CD4-positive, alpha-beta memory T cell (primary cell): ENCODE measurements at regions of chr7 and their contacts with region 1.

Region 1: DNA sequence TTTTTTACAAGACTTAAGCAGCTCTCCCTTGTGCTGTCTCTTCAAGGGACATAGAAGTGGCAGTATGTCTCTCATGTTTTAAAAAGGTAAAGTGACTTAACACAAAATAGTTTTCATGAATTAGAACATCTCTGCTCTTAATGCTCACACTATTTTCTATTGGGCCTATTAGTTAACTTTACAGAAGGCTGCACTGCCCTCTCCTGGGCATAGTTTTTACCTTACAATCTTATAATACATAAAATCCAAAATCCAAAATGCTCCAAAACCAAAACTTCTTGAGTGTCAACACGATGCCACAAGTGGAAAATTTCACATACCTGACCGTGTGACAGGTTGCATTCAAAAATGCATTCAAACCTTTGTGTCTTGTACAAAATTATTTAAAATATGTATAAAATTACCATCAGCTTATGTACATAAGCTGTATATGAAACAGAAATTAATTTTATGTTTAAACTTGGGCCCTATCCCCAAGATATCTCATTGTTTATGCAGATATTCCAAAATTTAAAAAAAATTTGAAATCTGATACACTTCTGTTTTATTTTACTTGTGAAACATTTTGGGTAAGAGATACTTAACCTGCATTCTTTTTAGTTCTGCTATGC is 25.8 kb downstream of the TES start:
- DNase-seq: peak; percentile 50 to 65 (median 62)
- H3K4me3 ChIP-seq: no peak overlapping the region
- H3K4me3 Mint-ChIP-seq: peak overlapping the region in 4 of 8 donors; percentile 19 to 52 (median 24)
- H3K27ac ChIP-seq: no peak overlapping the region
- H3K27ac Mint-ChIP-seq: peak overlapping the region; percentile 4 to 84 (median 63)
- H3K4me1 ChIP-seq: peaks cover 50% of the 10 kb centered on the region
- H3K4me1 Mint-ChIP-seq: peaks cover 53 to 88% (median 54%) of the 10 kb centered on the region in 4 donors
- H3K27me3 ChIP-seq: no peaks in the 10 kb centered on the region
- H3K27me3 Mint-ChIP-seq: no peaks in the 10 kb centered on the region

Region 2: DNA sequence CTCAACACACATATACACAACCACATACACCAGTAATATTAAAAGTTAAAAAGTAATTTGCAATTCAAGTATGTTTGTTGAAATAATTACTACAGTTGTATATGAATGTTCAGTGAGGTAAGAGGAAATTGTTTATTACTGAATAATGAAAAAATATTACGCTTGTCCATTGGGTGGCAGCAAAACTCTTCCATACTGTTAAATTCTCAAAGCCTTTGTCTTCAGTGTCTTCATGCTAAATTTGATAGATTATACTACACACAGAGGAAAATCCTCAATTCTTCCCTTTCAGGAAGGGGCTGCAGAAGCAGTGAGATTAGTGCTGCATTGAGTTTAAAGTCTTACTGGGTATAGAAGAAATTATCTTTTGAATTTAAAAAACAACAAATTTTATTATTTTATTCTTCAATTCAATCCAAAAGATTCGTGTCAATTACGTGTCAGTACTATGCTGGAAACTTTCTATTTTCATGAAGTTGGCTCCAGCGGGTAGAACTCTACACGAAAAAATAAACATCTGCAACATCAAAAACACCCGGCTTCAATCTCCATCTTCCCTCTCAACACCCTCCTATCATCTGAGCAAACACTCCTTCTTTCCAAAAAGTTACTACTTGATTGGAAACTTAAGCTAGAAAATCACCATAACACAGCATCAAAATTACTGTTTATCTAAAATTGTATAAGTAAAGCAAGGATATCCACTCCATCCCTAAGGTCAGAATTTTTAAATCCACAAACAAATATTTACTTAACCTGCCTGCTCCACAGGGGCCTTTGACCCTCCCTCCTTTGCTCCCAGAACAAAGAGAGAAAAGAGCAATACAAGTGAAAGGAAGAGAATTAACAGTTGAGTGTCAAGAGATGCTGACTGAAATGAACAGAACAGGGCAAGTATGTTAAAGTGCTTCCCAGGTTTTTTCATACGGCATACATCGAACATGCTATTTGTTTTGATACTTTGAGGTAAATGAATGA is 62.8 kb before region 1 on chr7:
- CTCF ChIA-PET with region 1: interaction called, 409 read pairs
- POLR2A ChIA-PET with region 1: interaction called, 5 read pairs
- intact Hi-C with region 1: no loop called
- DNase-seq: peak in 4 of 5 donors; percentile 52 to 65 (median 60)
- H3K4me3 ChIP-seq: no peak overlapping the region
- H3K4me3 Mint-ChIP-seq: no peak overlapping the region
- H3K27ac ChIP-seq: no peak overlapping the region
- H3K27ac Mint-ChIP-seq: no peak overlapping the region
- H3K4me1 ChIP-seq: no peaks in the 10 kb centered on the region
- H3K4me1 Mint-ChIP-seq: no peaks in the 10 kb centered on the region
- H3K27me3 ChIP-seq: no peaks in the 10 kb centered on the region
- H3K27me3 Mint-ChIP-seq: peaks cover 10 to 11% of the 10 kb centered on the region in 2 donors

Region 3: DNA sequence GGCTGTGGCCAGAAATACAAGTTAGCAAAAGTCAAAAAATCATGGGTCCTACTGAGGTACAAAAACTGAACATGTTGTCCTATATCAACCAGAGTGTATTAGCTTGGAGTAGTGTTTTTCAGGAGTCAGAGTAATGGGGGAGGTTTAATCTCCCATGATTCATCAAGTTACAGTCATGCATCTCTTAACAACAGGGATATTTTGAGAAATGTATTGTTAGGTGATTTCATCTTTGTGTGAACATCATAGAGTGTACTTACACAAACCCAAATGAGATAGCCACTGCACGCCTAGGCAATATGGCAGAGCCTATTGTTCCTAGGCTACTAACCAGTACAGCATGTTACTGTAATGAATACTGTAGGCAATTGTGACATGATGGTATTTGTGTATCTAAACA is 40.7 kb before region 1 on chr7:
- CTCF ChIA-PET with region 1: interaction called, 34 read pairs
- POLR2A ChIA-PET with region 1: no interaction called
- intact Hi-C with region 1: no loop called
- DNase-seq: no peak
- H3K4me3 ChIP-seq: no peak overlapping the region
- H3K4me3 Mint-ChIP-seq: no peak overlapping the region
- H3K27ac ChIP-seq: no peak overlapping the region
- H3K27ac Mint-ChIP-seq: no peak overlapping the region
- H3K4me1 ChIP-seq: no peaks in the 10 kb centered on the region
- H3K4me1 Mint-ChIP-seq: no peaks in the 10 kb centered on the region
- H3K27me3 ChIP-seq: no peaks in the 10 kb centered on the region
- H3K27me3 Mint-ChIP-seq: peaks cover 4% of the 10 kb centered on the region in 2 donors

Region 4: DNA sequence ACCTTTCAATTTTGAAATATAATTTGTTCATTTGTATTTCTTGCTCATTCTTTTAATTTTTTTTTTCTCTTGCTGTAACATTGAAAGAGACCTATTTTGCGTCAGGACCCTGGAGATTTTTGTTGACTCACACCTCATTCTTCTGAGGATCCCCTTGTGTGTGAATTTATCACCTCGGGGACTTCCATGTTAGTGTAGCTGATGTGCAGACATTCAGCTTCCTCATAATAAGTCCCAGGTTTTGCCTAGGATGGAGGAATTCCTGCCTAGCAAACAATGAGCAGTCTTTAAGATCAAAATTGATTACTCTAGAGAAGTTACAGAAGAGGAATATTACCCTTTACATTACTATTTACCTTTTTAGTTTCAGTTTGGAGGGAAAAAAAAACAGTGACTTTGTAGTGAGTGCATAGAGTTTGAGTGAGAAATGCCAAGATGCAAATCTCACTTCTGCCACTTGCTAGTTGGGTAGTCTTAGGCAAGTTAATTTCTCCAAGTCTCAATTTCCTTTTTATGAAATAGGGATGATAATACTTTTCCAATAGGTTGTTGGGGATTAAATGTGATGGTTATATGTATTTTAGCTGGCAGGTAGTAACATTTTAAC is 11.5 kb before region 1 on chr7:
- CTCF ChIA-PET with region 1: interaction called, 20 read pairs
- POLR2A ChIA-PET with region 1: interaction called, 25 read pairs
- intact Hi-C with region 1: no loop called
- DNase-seq: peak in 2 of 5 donors; percentile 21 to 57
- H3K4me3 ChIP-seq: no peak overlapping the region
- H3K4me3 Mint-ChIP-seq: peak overlapping the region; percentile 11 to 83 (median 64)
- H3K27ac ChIP-seq: no peak overlapping the region
- H3K27ac Mint-ChIP-seq: peak overlapping the region; percentile 38 to 79 (median 74)
- H3K4me1 ChIP-seq: peaks cover 93% of the 10 kb centered on the region
- H3K4me1 Mint-ChIP-seq: peaks cover 74 to 93% (median 80%) of the 10 kb centered on the region in 4 donors
- H3K27me3 ChIP-seq: no peaks in the 10 kb centered on the region
- H3K27me3 Mint-ChIP-seq: no peaks in the 10 kb centered on the region

Region 5: DNA sequence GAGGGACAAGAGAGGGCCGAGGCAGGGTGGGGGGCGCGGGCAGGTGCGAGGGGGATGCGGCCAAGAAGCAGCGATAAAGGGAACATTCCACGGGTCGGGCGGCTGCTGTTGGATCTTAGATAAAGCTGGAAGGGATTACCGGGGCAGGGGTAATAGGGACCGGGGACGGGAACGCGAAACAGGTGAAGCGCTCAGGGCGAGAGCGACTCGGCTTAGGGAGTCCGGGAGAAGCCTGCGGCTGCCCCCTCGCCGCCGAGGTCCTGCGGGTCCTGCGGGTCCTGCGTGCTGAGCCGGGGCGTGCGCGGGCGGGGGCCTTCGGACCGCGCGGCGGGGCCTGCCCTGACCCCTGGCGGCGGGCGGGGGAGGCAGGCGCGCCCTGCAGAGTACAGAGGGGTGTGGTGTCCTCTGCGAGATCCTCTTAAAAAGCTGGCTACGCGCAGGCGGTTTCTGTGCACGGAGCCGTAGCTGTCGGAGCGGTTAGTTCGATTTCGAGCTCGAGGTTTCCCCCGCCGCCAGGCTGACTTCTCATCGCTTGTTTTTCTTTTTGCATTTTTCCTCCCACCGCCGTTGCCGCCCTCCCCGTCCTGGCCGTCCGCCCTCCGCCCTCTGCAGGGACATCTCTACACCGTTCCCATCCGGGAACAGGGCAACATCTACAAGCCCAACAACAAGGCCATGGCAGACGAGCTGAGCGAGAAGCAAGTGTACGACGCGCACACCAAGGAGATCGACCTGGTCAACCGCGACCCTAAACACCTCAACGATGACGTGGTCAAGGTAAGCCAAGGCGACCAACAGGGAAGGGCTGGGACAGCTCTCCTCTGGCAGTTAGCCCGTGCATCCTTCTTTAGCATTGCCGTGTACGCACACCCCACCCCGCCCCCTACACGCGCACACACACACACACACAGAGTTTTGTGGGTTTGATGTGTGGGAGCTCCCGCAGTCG is 290.1 kb after region 1 on chr7:
- CTCF ChIA-PET with region 1: interaction called, 12 read pairs
- POLR2A ChIA-PET with region 1: no interaction called
- intact Hi-C with region 1: no loop called
- DNase-seq: peak; percentile 50 to 67 (median 63)
- H3K4me3 ChIP-seq: peak overlapping the region in 1 of 2 donors; percentile 35
- H3K4me3 Mint-ChIP-seq: peak overlapping the region; percentile 80 to 94 (median 87)
- H3K27ac ChIP-seq: no peak overlapping the region
- H3K27ac Mint-ChIP-seq: no peak overlapping the region
- H3K4me1 ChIP-seq: peaks cover 22% of the 10 kb centered on the region
- H3K4me1 Mint-ChIP-seq: peaks cover 12 to 30% (median 22%) of the 10 kb centered on the region in 4 donors
- H3K27me3 ChIP-seq: peaks cover 29% of the 10 kb centered on the region
- H3K27me3 Mint-ChIP-seq: peaks cover 53 to 60% of the 10 kb centered on the region in 2 donors